ENCODE measurements at regions of chr18 and their contacts with region 1.

Region 1: GRCh38 chr18:58590839-58591238 is 38.1 kb downstream of the ALPK2 start:
- DNase-seq: no peak
- ATAC-seq: peak; percentile 68
- H3K4me3 ChIP-seq: peak overlapping the region in 1 of 3 experiments; percentile 41; a peak in 2 of 6 replicates
- H3K27ac ChIP-seq: no peak overlapping the region
- H3K4me1 ChIP-seq: peaks cover 34% of the 10 kb centered on the region
- H3K27me3 ChIP-seq: peaks cover 4 to 17% of the 10 kb centered on the region in 2 experiments; a peak in 3 of 5 replicates
- CTCF ChIP-seq: no peak
- EP300 ChIP-seq: no peak
- POLR2A ChIP-seq: no peak
- RAD21 ChIP-seq: no peak

Region 2: GRCh38 chr18:58321986-58322385 is 268.9 kb before region 1 on chr18:
- CTCF ChIA-PET with region 1: no interaction called
- POLR2A ChIA-PET with region 1: no interaction called
- in situ Hi-C with region 1: no loop called
- intact Hi-C with region 1: no loop called
- DNase-seq: peak; percentile 50
- ATAC-seq: peak; percentile 75
- H3K4me3 ChIP-seq: no peak overlapping the region
- H3K27ac ChIP-seq: no peak overlapping the region
- H3K4me1 ChIP-seq: peaks cover 28% of the 10 kb centered on the region
- H3K27me3 ChIP-seq: no peaks in the 10 kb centered on the region
- CTCF ChIP-seq: peak; percentile 58
- EP300 ChIP-seq: no peak
- POLR2A ChIP-seq: no peak
- RAD21 ChIP-seq: 0 out of 2 replicates have a peak, but pooled peaks have one; percentile 20

Region 3: GRCh38 chr18:58605027-58606020 is 14.5 kb after region 1 on chr18:
- CTCF ChIA-PET with region 1: no interaction called
- POLR2A ChIA-PET with region 1: no interaction called
- in situ Hi-C with region 1: no loop called
- intact Hi-C with region 1: loop called (anchors 1 kb)
- DNase-seq: peak; percentile 99
- ATAC-seq: peak; percentile 92
- H3K4me3 ChIP-seq: no peak overlapping the region
- H3K27ac ChIP-seq: peak overlapping the region; percentile 45
- H3K4me1 ChIP-seq: peaks cover 78% of the 10 kb centered on the region
- H3K27me3 ChIP-seq: no peaks in the 10 kb centered on the region
- CTCF ChIP-seq: no peak
- EP300 ChIP-seq: peak in 1 of 2 experiments; percentile 95; a peak in 3 of 4 replicates
- POLR2A ChIP-seq: no peak
- RAD21 ChIP-seq: no peak

Measured in HepG2 (cell line).